Mucosa of descending colon (tissue), 3 donors: ENCODE measurements at regions of chr14 and their contacts with region 1.

Region 1: GRCh38 chr14:23903442-23903841 is 50.1 kb upstream of the DHRS4 start:
- DNase-seq: no peak
- ATAC-seq: no peak
- H3K4me3 ChIP-seq: no peak overlapping the region
- H3K4me1 ChIP-seq: no peaks in the 10 kb centered on the region
- CTCF ChIP-seq: no peak

Region 2: DNA sequence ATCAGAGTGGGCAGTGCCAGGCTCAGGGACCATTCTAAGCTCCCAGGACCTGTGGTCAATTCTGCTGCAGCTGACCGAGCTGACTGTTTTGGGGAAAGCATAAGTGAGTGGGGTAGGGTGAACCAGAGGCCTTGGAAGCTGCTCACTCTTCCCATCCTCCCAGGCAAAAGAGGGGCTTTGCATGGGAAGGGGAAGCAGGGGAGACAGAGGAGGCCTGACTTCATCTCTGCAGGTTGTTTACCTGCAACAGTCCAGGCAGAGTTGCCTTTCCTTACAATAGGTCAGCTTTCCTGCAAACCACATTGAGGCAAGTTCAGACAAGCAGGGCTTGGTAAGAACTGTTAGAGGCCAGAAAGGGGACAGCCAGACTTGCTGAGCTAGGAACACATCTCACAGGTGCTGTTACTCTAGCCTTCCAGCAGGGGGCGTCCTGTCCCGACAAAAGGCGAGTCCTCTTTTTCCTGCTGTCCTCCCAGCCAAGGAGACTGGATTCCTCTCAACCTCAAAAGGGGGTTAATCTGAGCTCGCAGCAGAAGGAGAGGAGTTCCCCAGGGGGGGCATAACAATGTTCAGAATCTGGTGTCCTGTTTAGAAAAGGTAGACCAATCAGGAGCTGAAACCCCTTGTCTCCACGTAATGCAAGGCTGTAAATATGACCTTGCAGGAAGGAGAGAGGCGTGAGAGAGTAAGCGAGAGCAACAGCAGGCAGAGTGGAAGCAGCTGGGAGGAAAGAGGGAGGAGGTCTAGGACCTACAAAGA is 271.6 kb before region 1 on chr14:
- intact Hi-C with region 1: loop called in 1 of 2 experiments (anchors 10 kb)
- DNase-seq: peak in 2 of 3 donors; percentile 67 to 85
- ATAC-seq: peak; percentile 97
- H3K4me3 ChIP-seq: no peak overlapping the region
- H3K4me1 ChIP-seq: no peaks in the 10 kb centered on the region
- CTCF ChIP-seq: peak; percentile 86

Region 3: DNA sequence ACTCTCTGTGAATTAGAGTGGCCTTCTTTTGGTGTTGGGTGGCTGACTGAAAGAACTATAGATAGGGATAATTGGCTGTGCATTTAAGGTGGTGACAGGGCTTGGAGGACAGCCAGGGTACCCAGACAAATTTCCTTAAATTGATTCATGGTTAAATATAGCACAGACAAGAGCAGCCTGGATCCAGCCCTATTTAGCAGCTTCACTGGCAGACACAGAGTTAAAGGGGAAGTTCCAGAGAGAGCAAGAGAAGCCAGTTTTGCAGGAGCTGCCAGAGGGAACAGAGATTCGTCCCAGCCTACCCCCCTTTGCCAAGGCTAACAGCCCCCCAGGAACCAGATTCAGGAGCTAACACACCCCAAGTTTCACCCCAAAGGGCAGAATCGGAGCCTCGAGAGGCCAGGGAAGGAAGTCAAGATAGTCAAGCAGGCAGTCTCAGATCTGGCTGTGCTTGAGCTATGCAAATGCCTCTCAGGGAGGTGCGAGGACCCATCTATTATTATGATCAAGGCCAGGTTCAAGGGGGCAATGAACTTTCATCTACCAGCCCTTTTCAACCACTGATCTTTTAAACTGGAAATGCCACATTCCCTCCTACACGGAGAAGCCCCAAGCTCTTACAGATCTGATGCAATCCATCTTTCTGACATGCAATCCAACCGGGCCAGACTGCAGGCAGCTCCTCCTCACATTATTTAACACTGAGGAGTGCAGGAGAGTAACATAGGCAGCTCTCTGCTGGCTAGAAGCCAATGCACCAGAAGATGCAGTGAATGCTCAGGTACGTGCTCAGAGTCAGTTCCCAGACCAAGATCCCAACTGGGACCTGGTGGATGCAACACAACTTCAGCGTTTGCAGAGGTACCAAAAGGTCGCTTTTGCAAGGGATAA is 209.1 kb before region 1 on chr14:
- intact Hi-C with region 1: no loop called
- DNase-seq: no peak
- ATAC-seq: no peak
- H3K4me3 ChIP-seq: no peak overlapping the region
- H3K4me1 ChIP-seq: no peaks in the 10 kb centered on the region
- CTCF ChIP-seq: no peak